GM12878 (cell line): ENCODE measurements at regions of chr19 and their contacts with region 1.

Region 1: GRCh38 chr19:35330475-35330874 is 1.5 kb downstream of the CD22 start:
- DNase-seq: peak; percentile 93
- ATAC-seq: peak; percentile 56
- H3K4me3 ChIP-seq: peak overlapping the region; percentile 92
- H3K27ac ChIP-seq: peak overlapping the region; percentile 93
- H3K4me1 ChIP-seq: peaks cover 35% of the 10 kb centered on the region
- H3K27me3 ChIP-seq: no peaks in the 10 kb centered on the region
- CTCF ChIP-seq: no peak
- EP300 ChIP-seq: peak in 1 of 2 experiments; percentile 58; a peak in 2 of 4 replicates
- POLR2A ChIP-seq: peak; percentile 85
- RAD21 ChIP-seq: no peak

Region 2: DNA sequence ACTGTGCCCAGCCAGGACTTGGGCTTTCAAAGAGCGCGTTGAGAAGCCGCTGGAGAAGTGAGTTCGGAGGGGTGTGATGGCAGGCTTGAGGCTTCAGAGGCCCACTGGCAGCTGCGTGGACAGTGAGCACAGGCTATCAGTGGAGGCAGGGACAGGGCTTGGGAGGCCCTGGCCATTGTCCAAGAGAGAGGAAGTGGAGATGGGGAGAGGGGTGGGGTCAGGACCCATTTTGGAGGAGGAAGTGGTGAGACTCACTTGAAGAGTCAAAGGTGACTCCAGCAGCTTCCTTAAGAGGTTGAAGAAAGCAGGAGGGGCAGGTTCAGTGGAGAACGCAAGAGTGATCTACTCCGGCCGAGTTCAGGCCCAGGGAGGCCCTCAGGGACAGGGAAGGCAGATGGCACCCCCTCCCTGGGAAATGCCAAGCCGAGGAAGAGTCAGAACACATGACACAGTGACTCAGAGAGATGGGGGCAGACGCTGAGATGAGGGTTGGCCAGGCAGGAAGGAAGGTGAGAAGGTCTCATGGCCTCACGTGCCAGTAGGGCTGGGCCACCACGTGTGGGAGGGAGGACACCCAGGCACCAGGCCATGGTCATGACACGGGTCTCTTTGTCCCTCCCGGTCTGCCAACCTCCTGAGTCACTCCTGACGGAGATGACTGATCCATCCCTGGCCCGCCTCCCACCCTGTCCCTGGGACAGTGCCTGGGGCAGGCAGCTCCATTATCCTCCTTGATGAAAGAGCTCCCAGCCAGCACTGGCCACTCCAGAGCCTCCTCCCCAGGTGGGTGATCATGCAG is 11.6 kb before region 1 on chr19:
- CTCF ChIA-PET with region 1: interaction called, 35 read pairs
- POLR2A ChIA-PET with region 1: interaction called, 58 read pairs
- RAD21 ChIA-PET with region 1: interaction called, 54 read pairs
- SMC1A ChIA-PET with region 1: interaction called, 122 read pairs
- in situ Hi-C with region 1: no loop called
- intact Hi-C with region 1: no loop called
- DNase-seq: no peak
- ATAC-seq: peak; percentile 18; the same call in 1 of the 3 replicates
- H3K4me3 ChIP-seq: no peak overlapping the region
- H3K27ac ChIP-seq: no peak overlapping the region
- H3K4me1 ChIP-seq: peaks cover 27% of the 10 kb centered on the region
- H3K27me3 ChIP-seq: no peaks in the 10 kb centered on the region
- CTCF ChIP-seq: no peak
- EP300 ChIP-seq: no peak
- POLR2A ChIP-seq: no peak
- RAD21 ChIP-seq: no peak

Region 3: GRCh38 chr19:35375505-35376307 is 45.2 kb after region 1 on chr19:
- CTCF ChIA-PET with region 1: interaction called, 6 read pairs
- POLR2A ChIA-PET with region 1: interaction called, 6 read pairs
- RAD21 ChIA-PET with region 1: interaction called, 5 read pairs
- SMC1A ChIA-PET with region 1: interaction called, 15 read pairs
- in situ Hi-C with region 1: no loop called
- intact Hi-C with region 1: no loop called
- DNase-seq: no peak
- ATAC-seq: peak; percentile 36; the same call in 2 of the 3 replicates
- H3K4me3 ChIP-seq: no peak overlapping the region
- H3K27ac ChIP-seq: peak overlapping the region; percentile 51; the same call in 1 of the 2 replicates
- H3K4me1 ChIP-seq: peaks cover 31% of the 10 kb centered on the region
- H3K27me3 ChIP-seq: no peaks in the 10 kb centered on the region
- CTCF ChIP-seq: no peak
- EP300 ChIP-seq: no peak
- POLR2A ChIP-seq: no peak
- RAD21 ChIP-seq: no peak

Region 4: GRCh38 chr19:35417713-35418534 is 87.4 kb after region 1 on chr19:
- CTCF ChIA-PET with region 1: interaction called, 3 read pairs
- POLR2A ChIA-PET with region 1: interaction called, 11 read pairs
- RAD21 ChIA-PET with region 1: interaction called, 4 read pairs
- SMC1A ChIA-PET with region 1: interaction called, 4 read pairs
- in situ Hi-C with region 1: no loop called
- intact Hi-C with region 1: no loop called
- DNase-seq: peak; percentile 88
- ATAC-seq: peak; percentile 63
- H3K4me3 ChIP-seq: no peak overlapping the region; the same call in 1 of the 2 replicates
- H3K27ac ChIP-seq: peak overlapping the region; percentile 68
- H3K4me1 ChIP-seq: peaks cover 41% of the 10 kb centered on the region
- H3K27me3 ChIP-seq: no peaks in the 10 kb centered on the region
- CTCF ChIP-seq: no peak
- EP300 ChIP-seq: peak; percentile 55 to 60; a peak in 2 of 4 replicates
- POLR2A ChIP-seq: no peak
- RAD21 ChIP-seq: peak; percentile 15; the same call in 1 of the 2 replicates

Region 5: GRCh38 chr19:35468637-35469036 is 138.2 kb after region 1 on chr19:
- CTCF ChIA-PET with region 1: interaction called, 8 read pairs
- POLR2A ChIA-PET with region 1: interaction called, 14 read pairs
- RAD21 ChIA-PET with region 1: interaction called, 37 read pairs
- SMC1A ChIA-PET with region 1: interaction called, 18 read pairs
- in situ Hi-C with region 1: no loop called
- intact Hi-C with region 1: no loop called
- DNase-seq: peak; percentile 82
- ATAC-seq: peak; percentile 100
- H3K4me3 ChIP-seq: no peak overlapping the region
- H3K27ac ChIP-seq: 0 out of 2 replicates have a peak overlapping the region, but pooled peaks have one; percentile 6
- H3K4me1 ChIP-seq: peaks cover 9% of the 10 kb centered on the region
- H3K27me3 ChIP-seq: no peaks in the 10 kb centered on the region
- CTCF ChIP-seq: peak; percentile 85 to 96 (median 93); a peak in 5 of 6 replicates
- EP300 ChIP-seq: peak in 1 of 2 experiments; percentile 65; a peak in 2 of 4 replicates
- POLR2A ChIP-seq: no peak
- RAD21 ChIP-seq: peak; percentile 99

Region 6: DNA sequence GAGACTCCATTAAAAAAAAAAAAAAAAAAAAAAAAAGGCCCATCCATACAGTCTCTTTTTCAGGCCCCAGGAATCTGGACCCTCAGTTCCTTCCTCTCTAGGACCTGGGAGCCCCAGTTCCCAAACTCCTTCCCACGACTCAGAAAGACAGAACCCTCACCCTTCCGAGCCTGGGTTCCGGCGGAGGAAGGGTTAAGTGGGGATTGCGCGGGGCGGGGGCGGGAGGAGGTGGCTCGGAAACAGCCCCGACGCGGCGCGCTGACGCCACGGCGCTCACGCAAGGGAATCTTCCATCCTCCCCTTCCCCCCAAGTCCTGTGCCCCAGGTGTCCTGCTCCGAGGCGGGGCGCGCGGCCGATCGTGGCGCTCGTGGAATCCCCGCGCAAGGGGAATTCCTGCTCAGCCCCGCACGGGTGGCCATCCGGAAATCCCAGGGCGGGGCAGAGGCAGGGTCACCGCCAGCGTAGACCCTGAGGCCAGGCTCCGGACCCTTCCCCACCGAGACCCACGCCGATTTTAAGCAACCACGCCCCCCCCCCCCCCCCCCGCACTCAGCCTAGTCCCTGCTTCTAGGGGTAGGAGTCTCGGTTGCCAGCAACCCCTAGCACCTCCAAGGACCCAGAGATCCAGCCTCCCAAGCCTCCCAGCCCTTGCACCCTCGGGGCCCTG is 569.2 kb after region 1 on chr19:
- CTCF ChIA-PET with region 1: no interaction called
- POLR2A ChIA-PET with region 1: no interaction called
- RAD21 ChIA-PET with region 1: no interaction called
- SMC1A ChIA-PET with region 1: no interaction called
- in situ Hi-C with region 1: loop called (anchors 10 kb)
- intact Hi-C with region 1: no loop called
- DNase-seq: peak; percentile 78
- ATAC-seq: peak; percentile 69
- H3K4me3 ChIP-seq: peak overlapping the region; percentile 96
- H3K27ac ChIP-seq: peak overlapping the region; percentile 96
- H3K4me1 ChIP-seq: peaks cover 37% of the 10 kb centered on the region
- H3K27me3 ChIP-seq: no peaks in the 10 kb centered on the region
- CTCF ChIP-seq: no peak
- EP300 ChIP-seq: peak; percentile 54 to 58; a peak in 2 of 4 replicates
- POLR2A ChIP-seq: peak; percentile 38; the same call in 1 of the 2 replicates
- RAD21 ChIP-seq: no peak